Activated CD4-positive, alpha-beta memory T cell treated with anti-CD3 and anti-CD28 coated beads for 36 hours (primary cell): ENCODE measurements at regions of chr17 and their contacts with region 1.

Region 1: GRCh38 chr17:40317880-40318829 is 9.2 kb downstream of the RARA start:
- DNase-seq: peak; percentile 95
- H3K4me3 Mint-ChIP-seq: peak overlapping the region; percentile 99
- H3K27ac Mint-ChIP-seq: peak overlapping the region; percentile 99
- H3K4me1 Mint-ChIP-seq: peaks cover 80% of the 10 kb centered on the region
- H3K27me3 Mint-ChIP-seq: peaks cover 2% of the 10 kb centered on the region

Region 2: GRCh38 chr17:40098846-40099618 is 219.1 kb before region 1 on chr17:
- CTCF ChIA-PET with region 1: no interaction called
- POLR2A ChIA-PET with region 1: no interaction called
- intact Hi-C with region 1: loop called (anchors 2 kb)
- DNase-seq: peak; percentile 99
- H3K4me3 Mint-ChIP-seq: peak overlapping the region; percentile 88
- H3K27ac Mint-ChIP-seq: peak overlapping the region; percentile 91
- H3K4me1 Mint-ChIP-seq: peaks cover 85% of the 10 kb centered on the region
- H3K27me3 Mint-ChIP-seq: no peaks in the 10 kb centered on the region

Region 3: DNA sequence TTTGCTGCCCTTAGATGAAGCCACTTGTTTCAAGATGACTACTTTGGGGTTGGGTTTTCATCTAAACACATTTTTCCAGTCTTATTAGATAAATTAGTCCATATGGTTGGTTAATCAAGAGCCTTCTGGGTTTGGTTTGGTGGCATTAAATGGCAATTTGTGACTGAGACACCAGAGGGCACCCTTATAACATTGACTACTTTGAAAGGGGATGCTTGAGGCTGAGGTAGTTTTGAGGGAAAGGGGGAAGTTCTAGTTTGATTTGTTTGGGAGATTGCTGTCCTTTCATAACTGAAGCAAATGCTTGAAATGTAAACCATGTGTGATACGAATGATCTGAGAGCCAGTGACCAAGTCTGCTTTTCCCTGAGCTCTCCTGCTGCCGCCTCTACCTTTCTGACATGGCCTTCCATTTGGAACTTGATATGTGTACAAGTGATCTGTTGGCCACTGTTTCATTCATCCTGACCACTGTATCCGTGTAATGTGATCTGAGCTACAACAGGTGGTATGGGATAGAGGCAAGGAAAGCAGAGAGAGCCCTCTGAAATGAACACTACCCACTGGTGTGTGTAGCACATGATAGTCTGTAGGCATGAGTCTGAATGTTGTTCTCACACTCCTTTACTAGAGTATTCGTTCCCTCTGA is 15.0 kb before region 1 on chr17:
- CTCF ChIA-PET with region 1: interaction called, 50 read pairs
- POLR2A ChIA-PET with region 1: interaction called, 11 read pairs
- intact Hi-C with region 1: no loop called
- DNase-seq: peak; percentile 46
- H3K4me3 Mint-ChIP-seq: no peak overlapping the region
- H3K27ac Mint-ChIP-seq: peak overlapping the region; percentile 36
- H3K4me1 Mint-ChIP-seq: peaks cover 15% of the 10 kb centered on the region
- H3K27me3 Mint-ChIP-seq: no peaks in the 10 kb centered on the region

Region 4: GRCh38 chr17:40355123-40355803 is 37.1 kb after region 1 on chr17:
- CTCF ChIA-PET with region 1: interaction called, 34 read pairs
- POLR2A ChIA-PET with region 1: no interaction called
- intact Hi-C with region 1: loop called (anchors 5 kb)
- DNase-seq: peak; percentile 83
- H3K4me3 Mint-ChIP-seq: no peak overlapping the region
- H3K27ac Mint-ChIP-seq: no peak overlapping the region
- H3K4me1 Mint-ChIP-seq: peaks cover 17% of the 10 kb centered on the region
- H3K27me3 Mint-ChIP-seq: no peaks in the 10 kb centered on the region

Region 5: GRCh38 chr17:40417609-40418427 is 99.7 kb after region 1 on chr17 and contains the start of gene TOP2A:
- CTCF ChIA-PET with region 1: no interaction called
- POLR2A ChIA-PET with region 1: no interaction called
- intact Hi-C with region 1: loop called (anchors 5 kb)
- DNase-seq: peak; percentile 98
- H3K4me3 Mint-ChIP-seq: peak within 1 kb of the TSS; percentile 99
- H3K27ac Mint-ChIP-seq: peak within 1 kb of the TSS; percentile 89
- H3K4me1 Mint-ChIP-seq: peaks cover 30% of the 10 kb centered on the region
- H3K27me3 Mint-ChIP-seq: no peaks in the 10 kb centered on the region
- total RNA-seq, gene TOP2A: 301 to 311 TPM

Region 6: GRCh38 chr17:40433551-40434415 is 115.6 kb after region 1 on chr17:
- CTCF ChIA-PET with region 1: no interaction called
- POLR2A ChIA-PET with region 1: no interaction called
- intact Hi-C with region 1: no loop called
- DNase-seq: peak; percentile 51
- H3K4me3 Mint-ChIP-seq: no peak overlapping the region
- H3K27ac Mint-ChIP-seq: no peak overlapping the region
- H3K4me1 Mint-ChIP-seq: peaks cover 11% of the 10 kb centered on the region
- H3K27me3 Mint-ChIP-seq: no peaks in the 10 kb centered on the region

Region 7: GRCh38 chr17:40608061-40608588 is 290.0 kb after region 1 on chr17:
- CTCF ChIA-PET with region 1: no interaction called
- POLR2A ChIA-PET with region 1: no interaction called
- intact Hi-C with region 1: loop called (anchors 5 kb)
- DNase-seq: peak; percentile 64
- H3K4me3 Mint-ChIP-seq: peak overlapping the region; percentile 5
- H3K27ac Mint-ChIP-seq: peak overlapping the region; percentile 78
- H3K4me1 Mint-ChIP-seq: peaks cover 95% of the 10 kb centered on the region
- H3K27me3 Mint-ChIP-seq: no peaks in the 10 kb centered on the region